Activated T-helper 2 cell treated with anti-CD3 and anti-CD28 coated beads, Interferon-gamma antibody, Interleukin-2, Interleukin-4, amounts not matched to agents 10 μg/mL and 5 μg/mL and 100 μg/mL, durations not matched to agents 14 hours and 24 hours and 36 hours (primary cell): ENCODE measurements at regions of chr3 and their contacts with region 1.

Region 1: GRCh38 chr3:182713743-182714517 is 79.4 kb upstream of the ATP11B start:
- DNase-seq: no peak
- H3K4me3 Mint-ChIP-seq: no peak overlapping the region
- H3K27ac Mint-ChIP-seq: no peak overlapping the region
- H3K4me1 Mint-ChIP-seq: peaks cover 11% of the 10 kb centered on the region
- H3K27me3 Mint-ChIP-seq: no peaks in the 10 kb centered on the region

Region 2: GRCh38 chr3:182837855-182838454 is 124.0 kb after region 1 on chr3:
- intact Hi-C with region 1: loop called (anchors 1 kb)
- DNase-seq: no peak
- H3K4me3 Mint-ChIP-seq: no peak overlapping the region
- H3K27ac Mint-ChIP-seq: no peak overlapping the region
- H3K4me1 Mint-ChIP-seq: peaks cover 8% of the 10 kb centered on the region
- H3K27me3 Mint-ChIP-seq: no peaks in the 10 kb centered on the region

Region 3: DNA sequence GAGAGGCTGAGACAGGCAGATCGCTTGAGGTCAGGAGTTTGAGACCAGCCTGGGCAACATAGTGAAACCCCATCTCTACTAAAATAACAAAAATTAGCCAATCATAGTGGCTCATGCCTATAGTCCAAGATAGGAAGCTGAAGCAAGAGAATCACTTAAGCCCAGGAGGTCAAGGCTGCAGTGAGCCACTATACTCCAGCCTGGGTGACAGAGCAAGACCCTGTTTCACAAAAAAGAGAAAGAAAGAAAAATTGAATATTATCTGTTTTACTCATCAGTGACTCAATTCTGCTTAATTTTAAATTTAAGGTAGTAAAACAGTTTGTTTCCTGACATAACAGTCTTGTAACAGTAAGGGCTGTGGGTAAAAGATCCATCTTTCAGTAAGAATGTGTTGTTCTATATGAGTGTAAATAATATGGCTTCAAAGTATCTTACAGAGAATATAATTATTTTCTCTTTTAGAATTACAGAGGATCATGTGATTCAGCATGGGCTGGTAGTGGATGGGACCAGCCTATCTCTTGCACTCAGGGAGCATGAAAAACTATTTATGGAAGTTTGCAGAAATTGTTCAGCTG is 165.2 kb after region 1 on chr3:
- intact Hi-C with region 1: loop called (anchors 10 kb)
- DNase-seq: no peak
- H3K4me3 Mint-ChIP-seq: no peak overlapping the region
- H3K27ac Mint-ChIP-seq: no peak overlapping the region
- H3K4me1 Mint-ChIP-seq: peaks cover 5% of the 10 kb centered on the region
- H3K27me3 Mint-ChIP-seq: no peaks in the 10 kb centered on the region